ENCODE measurements at regions of chr7 and their contacts with region 1.

Region 1: DNA sequence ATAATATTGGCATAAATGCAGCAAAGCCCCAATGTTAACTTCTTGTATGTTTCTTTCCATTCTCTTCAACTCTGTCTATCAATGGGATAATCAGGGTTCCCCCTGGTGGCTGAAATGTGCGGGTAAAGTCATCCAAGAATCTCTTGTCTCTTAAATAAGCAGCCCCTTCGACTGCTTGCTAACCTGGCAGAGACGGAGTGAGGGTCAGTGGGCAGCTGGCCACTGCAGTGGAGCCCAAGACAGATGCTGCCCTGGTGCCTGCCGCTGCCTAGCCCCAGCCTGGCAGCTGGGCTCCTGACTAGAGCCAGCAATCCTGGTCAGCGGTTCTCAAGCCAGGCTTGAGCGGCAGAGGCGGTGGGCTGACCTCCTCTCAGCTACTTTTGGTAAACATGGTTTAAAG is 248.9 kb downstream of the COBL start:
- DNase-seq: peak; percentile 47 to 91 (median 73)
- H3K4me3 ChIP-seq: no peak overlapping the region
- H3K27ac ChIP-seq: no peak overlapping the region
- H3K4me1 ChIP-seq: peaks cover 0 to 5% of the 10 kb centered on the region in 2 donors
- H3K27me3 ChIP-seq: no peaks in the 10 kb centered on the region
- CTCF ChIP-seq: peak; percentile 54 to 74 (median 68)
- POLR2A ChIP-seq: no peak

Region 2: DNA sequence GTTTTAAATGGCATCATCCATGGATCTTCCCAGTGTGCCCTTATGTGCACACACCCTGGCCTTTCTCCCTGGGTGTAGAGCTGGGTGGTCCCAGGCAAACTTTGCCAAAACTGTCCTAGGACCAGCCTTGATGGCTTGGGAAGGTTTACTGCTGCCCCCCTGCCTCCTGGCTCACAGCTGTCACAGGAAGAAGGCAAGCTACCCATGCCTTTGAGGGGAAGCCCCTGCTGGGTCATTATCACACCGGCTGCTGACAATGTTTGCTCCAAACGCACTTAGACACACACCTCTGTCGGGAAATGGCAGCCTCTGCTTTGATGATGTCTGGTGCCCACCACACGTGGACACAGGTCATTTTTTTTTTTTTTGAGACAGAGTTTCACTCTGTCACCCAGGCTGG is 592.4 kb before region 1 on chr7:
- intact Hi-C with region 1: loop called in 1 of 2 experiments (anchors 10 kb)
- DNase-seq: no peak
- H3K4me3 ChIP-seq: no peak overlapping the region
- H3K27ac ChIP-seq: peak overlapping the region in 1 of 5 donors; percentile 38
- H3K4me1 ChIP-seq: no peaks in the 10 kb centered on the region
- H3K27me3 ChIP-seq: no peaks in the 10 kb centered on the region
- CTCF ChIP-seq: no peak
- POLR2A ChIP-seq: no peak

Region 3: DNA sequence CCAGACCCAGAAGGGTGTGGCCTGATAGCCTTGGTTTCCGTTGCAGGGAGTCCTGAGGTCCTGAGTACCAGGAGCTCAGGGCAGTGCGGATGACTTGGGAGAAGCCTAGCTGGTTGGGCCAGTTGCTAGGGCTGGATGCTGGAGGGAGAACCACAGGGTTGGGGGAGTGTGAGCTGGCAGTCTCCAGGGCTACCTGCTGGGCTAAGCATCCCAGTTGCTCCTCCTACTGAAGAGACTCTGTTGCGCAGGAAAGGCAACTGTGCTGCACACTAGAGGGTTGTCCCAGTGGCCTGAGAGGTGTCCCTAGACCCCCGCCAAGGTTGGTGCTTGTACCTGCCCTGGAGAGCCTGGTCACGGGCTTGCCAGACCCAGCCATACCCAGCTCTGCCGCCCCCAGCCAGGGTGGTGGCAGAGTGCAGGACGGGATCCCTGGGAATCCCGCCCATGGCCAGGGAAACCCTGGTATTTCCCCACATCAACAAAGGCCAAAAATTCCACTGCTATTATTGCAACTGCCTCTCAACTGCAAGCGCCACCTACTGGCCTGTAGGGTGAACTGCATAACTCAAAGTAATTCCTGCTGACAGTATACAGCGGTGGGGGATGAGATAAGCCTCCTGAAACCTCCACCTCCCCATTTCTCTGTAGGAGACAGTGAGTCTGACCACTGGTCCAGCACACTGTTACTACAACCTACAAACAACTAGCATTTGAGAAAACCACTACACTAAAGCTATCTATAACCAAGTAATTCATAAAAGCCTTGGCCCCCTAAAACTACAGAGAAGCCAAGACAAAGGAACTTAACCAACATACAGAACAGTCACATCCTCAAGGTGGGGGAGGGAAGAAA is 435.0 kb before region 1 on chr7:
- intact Hi-C with region 1: loop called in 1 of 2 experiments (anchors 10 kb)
- DNase-seq: peak in 5 of 7 donors; percentile 41 to 77 (median 60)
- H3K4me3 ChIP-seq: no peak overlapping the region
- H3K27ac ChIP-seq: no peak overlapping the region
- H3K4me1 ChIP-seq: no peaks in the 10 kb centered on the region
- H3K27me3 ChIP-seq: no peaks in the 10 kb centered on the region
- CTCF ChIP-seq: peak; percentile 60 to 82 (median 74)
- POLR2A ChIP-seq: no peak

Region 4: DNA sequence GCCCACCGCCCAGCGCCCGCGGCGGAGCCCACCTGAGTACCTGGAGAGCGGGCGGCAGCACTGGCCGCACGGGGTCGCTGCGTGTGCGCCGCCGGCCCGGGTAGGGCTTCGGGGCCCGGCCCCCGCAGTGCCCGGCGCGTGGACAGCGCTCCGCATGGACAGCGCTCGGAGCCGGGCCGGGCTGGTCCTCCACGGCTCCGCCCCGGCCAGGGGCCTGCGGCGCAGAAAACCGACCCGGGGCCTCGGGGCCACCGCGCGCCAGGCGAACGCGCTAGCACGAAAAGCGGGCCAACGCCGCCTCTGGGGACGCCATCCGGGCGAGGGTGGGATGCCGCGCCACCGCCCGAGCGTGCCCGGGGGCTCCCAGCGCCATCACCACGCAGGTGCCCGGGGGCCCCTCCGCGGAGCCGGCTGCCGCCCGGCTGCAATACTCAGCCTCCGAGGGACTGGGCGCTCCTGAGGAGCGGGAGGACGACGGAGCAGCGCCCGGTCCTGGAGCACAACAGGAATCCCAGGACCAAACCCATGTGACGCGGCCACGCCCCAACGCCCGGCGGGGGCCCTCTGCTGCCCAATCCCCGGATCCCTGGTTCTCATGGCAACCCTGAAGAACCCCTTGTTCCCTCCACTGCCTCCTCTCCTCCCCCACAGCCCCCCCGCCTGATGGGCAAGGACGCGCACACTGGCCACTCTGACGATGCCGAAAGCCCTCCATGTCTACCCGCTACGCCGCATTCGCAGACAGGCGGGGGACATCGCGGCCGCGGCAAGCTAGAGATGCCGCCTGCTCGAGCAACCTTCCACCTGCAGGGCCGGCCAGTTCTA is 285.2 kb before region 1 on chr7 and contains the start of gene GRB10:
- intact Hi-C with region 1: loop called in 1 of 2 experiments (anchors 10 kb)
- DNase-seq: peak; percentile 43 to 90 (median 69)
- H3K4me3 ChIP-seq: peak within 1 kb of the TSS in 1 of 4 donors; percentile 58
- H3K27ac ChIP-seq: peak within 1 kb of the TSS in 2 of 5 donors; percentile 58 to 69
- H3K4me1 ChIP-seq: peaks cover 0 to 45% of the 10 kb centered on the region in 2 donors
- H3K27me3 ChIP-seq: no peaks in the 10 kb centered on the region
- CTCF ChIP-seq: peak in 1 of 6 experiments; percentile 15
- POLR2A ChIP-seq: no peak
- total RNA-seq, gene GRB10: 47.5 to 158 (median 74.5) TPM

Region 5: DNA sequence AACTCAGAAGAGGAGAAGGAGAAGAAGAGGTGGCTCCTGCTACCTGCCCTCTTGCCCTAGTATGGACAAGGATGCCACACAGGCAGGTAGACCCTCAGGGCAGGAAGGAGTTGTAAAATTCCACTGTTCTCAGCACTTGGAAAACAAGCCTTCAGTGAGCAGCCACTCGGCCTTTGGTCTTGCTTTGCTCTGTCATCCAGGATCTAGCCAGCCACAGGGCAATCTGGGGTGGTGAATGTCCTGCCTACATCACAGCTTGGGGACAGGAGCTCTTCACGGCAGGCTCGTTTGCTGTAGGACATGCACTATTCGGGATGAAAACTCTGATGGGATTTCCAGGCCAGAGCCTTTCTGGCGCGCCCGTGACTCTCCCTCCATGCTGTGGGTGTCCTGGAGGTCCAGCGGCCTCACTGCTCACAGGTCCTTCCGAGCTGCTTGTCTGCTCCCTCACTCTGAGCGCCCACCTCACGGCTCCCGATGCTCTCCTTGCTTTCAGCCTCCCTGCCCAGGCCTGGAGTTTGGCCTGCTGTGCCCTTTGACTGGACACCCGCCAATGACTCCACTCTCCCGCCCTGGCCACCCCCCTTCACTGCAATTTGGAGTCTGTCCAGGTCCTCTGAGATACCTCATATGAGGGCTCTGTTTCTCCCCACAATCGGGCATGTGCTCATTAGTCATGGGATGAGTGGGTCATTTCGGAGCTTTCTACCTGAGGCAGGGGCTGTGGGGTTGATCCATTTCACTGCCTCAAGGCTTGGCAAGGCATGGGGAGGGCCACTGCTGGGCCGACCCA is 57.9 kb before region 1 on chr7:
- intact Hi-C with region 1: no loop called
- DNase-seq: peak in 4 of 7 donors; percentile 24 to 48 (median 26)
- H3K4me3 ChIP-seq: no peak overlapping the region
- H3K27ac ChIP-seq: no peak overlapping the region
- H3K4me1 ChIP-seq: no peaks in the 10 kb centered on the region
- H3K27me3 ChIP-seq: no peaks in the 10 kb centered on the region
- CTCF ChIP-seq: no peak
- POLR2A ChIP-seq: no peak

Region 6: GRCh38 chr7:51350200-51350921 is 282.6 kb after region 1 on chr7:
- intact Hi-C with region 1: no loop called
- DNase-seq: no peak
- H3K4me3 ChIP-seq: no peak overlapping the region
- H3K27ac ChIP-seq: no peak overlapping the region
- H3K4me1 ChIP-seq: no peaks in the 10 kb centered on the region
- H3K27me3 ChIP-seq: no peaks in the 10 kb centered on the region
- CTCF ChIP-seq: no peak
- POLR2A ChIP-seq: no peak